ENCODE measurements at regions of chr1 and their contacts with region 1.

Region 1: DNA sequence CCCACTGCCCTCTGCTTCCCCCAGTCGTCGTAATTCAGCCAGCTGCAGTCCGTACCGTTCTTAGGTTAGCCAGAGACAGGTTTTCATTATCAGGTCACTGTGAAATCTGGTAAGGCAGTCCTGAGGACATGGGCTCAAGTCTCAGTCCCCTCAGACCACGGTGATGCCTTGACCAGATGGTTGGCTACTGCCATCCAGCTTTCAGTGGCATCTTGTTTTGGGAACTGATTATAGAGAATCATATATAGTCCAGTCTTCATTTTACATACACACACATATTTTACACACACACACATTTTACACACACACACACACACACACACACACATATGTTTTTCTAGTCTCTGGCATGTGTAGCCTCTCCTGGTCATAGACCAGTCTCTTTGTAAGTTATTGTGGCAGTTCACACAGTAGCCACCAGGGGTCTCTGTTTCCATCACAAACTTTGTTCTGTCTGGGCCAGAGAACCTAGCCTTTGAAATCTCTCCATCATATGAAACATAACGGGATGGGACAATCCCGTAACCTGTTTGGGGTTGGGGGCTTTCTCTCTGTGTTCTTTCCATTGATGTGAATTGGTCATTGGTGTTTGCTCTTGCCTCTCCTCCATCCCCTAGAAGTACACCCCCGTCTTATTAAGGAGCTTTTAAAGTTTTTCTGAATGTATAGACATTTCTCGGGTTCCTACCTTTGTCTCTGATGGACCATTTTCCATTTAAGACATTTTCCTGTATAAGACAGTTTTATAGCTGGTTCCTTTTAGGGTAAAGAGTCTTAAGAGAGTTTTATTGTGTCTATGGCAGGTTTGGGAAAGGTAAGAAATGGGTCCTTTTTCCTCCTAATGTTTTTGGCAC is 8.4 kb upstream of the IKBKE start:
- DNase-seq: peak; percentile 88
- ATAC-seq: peak; percentile 73
- H3K4me3 Mint-ChIP-seq: no peak overlapping the region
- H3K27ac Mint-ChIP-seq: no peak overlapping the region
- H3K4me1 Mint-ChIP-seq: peaks cover 43% of the 10 kb centered on the region
- H3K27me3 Mint-ChIP-seq: no peaks in the 10 kb centered on the region

Region 2: GRCh38 chr1:206106328-206107167 is 355.3 kb before region 1 on chr1:
- CTCF ChIA-PET with region 1: no interaction called
- POLR2A ChIA-PET with region 1: no interaction called
- DNase-seq: peak; percentile 83
- ATAC-seq: peak; percentile 89
- H3K4me3 Mint-ChIP-seq: no peak overlapping the region
- H3K27ac Mint-ChIP-seq: no peak overlapping the region
- H3K4me1 Mint-ChIP-seq: no peaks in the 10 kb centered on the region
- H3K27me3 Mint-ChIP-seq: peaks cover 9% of the 10 kb centered on the region

Region 3: GRCh38 chr1:206449622-206450021 is 12.2 kb before region 1 on chr1:
- CTCF ChIA-PET with region 1: interaction called, 18 read pairs
- POLR2A ChIA-PET with region 1: interaction called, 3 read pairs
- DNase-seq: no peak
- ATAC-seq: no peak
- H3K4me3 Mint-ChIP-seq: no peak overlapping the region
- H3K27ac Mint-ChIP-seq: no peak overlapping the region
- H3K4me1 Mint-ChIP-seq: no peaks in the 10 kb centered on the region
- H3K27me3 Mint-ChIP-seq: no peaks in the 10 kb centered on the region

Region 4: DNA sequence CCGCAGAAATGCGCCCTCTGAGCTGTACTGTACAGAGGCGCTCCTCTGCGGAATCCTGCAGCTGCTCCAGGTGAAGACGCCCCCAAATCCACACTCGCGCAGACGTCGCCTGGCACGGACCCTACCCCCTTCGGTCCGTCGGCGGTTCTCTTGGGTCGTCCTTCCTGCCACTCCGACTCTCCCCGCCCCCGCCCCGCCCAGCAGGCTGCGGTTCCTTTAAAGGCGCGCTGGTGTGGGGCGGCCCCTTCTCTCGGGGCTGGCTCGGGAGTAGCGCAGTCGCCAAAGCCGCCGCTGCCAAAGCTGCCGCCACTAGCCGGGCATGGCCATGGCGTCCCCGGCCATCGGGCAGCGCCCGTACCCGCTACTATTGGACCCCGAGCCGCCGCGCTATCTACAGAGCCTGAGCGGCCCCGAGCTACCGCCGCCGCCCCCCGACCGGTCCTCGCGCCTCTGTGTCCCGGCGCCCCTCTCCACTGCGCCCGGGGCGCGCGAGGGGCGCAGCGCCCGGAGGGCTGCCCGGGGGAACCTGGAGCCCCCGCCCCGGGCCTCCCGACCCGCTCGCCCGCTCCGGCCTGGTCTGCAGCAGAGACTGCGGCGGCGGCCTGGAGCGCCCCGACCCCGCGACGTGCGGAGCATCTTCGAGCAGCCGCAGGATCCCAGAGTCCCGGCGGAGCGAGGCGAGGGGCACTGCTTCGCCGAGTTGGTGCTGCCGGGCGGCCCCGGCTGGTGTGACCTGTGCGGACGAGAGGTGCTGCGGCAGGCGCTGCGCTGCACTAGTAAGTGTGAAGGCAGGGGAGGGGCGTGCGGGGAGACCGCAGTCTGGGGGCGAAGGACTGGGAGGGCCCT is 45.7 kb after region 1 on chr1 and contains the start of gene RASSF5:
- CTCF ChIA-PET with region 1: interaction called, 11 read pairs
- POLR2A ChIA-PET with region 1: no interaction called
- DNase-seq: peak; percentile 87
- ATAC-seq: peak; percentile 90
- H3K4me3 Mint-ChIP-seq: peak within 1 kb of the TSS; percentile 73
- H3K27ac Mint-ChIP-seq: no peak within 1 kb of the TSS
- H3K4me1 Mint-ChIP-seq: peaks cover 45% of the 10 kb centered on the region
- H3K27me3 Mint-ChIP-seq: peaks cover 25% of the 10 kb centered on the region
- total RNA-seq, gene RASSF5: 192 to 195 TPM

Region 5: DNA sequence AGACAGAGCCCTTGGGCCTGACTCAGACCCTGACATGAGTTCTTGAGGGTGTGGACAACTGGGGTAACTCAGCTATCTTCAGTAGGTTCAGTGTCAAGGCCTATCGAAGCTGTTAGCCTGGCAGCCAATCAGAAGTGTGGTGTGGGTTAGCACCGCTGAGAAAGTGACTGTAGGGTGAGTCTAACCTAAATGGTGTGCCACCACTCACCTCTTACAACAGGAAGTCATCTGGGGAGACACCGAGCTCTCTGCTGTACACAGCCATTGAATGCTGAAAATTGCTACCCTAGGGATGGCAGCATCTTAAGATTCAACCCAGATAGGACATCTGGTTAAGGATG is 90.1 kb after region 1 on chr1:
- CTCF ChIA-PET with region 1: interaction called, 11 read pairs
- POLR2A ChIA-PET with region 1: no interaction called
- DNase-seq: peak; percentile 91
- ATAC-seq: peak; percentile 84
- H3K4me3 Mint-ChIP-seq: peak overlapping the region; percentile 76
- H3K27ac Mint-ChIP-seq: peak overlapping the region; percentile 97
- H3K4me1 Mint-ChIP-seq: peaks cover 65% of the 10 kb centered on the region
- H3K27me3 Mint-ChIP-seq: no peaks in the 10 kb centered on the region

Measured in activated CD8-positive, alpha-beta T cell treated with anti-CD3 and anti-CD28 coated beads, Interleukin-2, amount 10 ng/mL, durations not matched to agents 7 days and 5 days (primary cell).